Activated CD8-positive, alpha-beta memory T cell treated with anti-CD3 and anti-CD28 coated beads, Interleukin-2, amount 10 ng/mL, durations not matched to agents 7 days and 5 days (primary cell): ENCODE measurements at regions of chr12 and their contacts with region 1.

Region 1: DNA sequence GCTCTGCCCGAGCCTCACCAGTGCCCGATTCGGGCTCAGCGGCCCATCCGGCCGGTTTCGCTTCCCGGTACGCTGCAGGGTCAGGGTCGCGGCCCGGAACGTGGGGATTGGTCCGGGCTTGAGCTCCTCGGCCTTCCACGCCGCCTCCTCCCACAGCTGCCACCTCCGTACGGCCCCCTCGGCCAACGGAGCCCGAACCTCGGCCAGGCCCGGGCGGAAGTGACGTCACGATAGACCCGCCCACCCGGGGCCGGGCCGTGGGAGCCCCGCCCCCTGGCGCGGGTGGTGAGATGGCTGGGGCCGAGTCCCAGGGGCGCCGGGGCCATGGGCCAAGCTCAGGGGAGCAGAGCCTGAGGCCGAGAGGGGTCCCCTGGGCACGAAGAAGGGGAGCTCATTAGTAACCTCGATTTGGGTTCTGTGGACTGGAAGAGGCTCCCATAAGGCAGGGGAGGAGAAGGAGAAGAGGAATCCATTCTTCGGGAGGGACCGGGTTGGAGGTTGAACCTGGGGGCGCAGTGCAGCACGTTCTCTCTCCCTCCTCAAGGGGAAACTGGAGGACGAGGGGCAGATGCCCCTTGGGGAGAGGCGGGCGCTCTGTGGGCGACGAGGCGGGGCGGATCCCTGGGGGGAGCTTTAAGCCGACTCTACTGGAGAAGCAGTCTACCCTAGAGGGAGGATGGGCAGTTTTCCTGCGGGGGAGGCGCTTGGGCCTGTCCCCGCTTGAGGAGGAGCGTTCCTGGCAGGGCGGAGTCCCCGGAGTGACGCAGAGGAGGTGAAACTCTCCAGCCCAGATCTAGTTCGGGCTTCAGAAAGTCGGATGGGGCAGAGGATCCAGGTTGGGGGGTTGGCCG is at the start of gene MLF2:
- DNase-seq: peak; percentile 99
- ATAC-seq: peak; percentile 92
- H3K4me3 Mint-ChIP-seq: peak within 1 kb of the TSS; percentile 90
- H3K27ac Mint-ChIP-seq: peak within 1 kb of the TSS; percentile 98
- H3K4me1 Mint-ChIP-seq: peaks cover 25% of the 10 kb centered on the region
- H3K27me3 Mint-ChIP-seq: peaks cover 2% of the 10 kb centered on the region
- total RNA-seq, gene MLF2: 102 to 113 TPM

Region 2: DNA sequence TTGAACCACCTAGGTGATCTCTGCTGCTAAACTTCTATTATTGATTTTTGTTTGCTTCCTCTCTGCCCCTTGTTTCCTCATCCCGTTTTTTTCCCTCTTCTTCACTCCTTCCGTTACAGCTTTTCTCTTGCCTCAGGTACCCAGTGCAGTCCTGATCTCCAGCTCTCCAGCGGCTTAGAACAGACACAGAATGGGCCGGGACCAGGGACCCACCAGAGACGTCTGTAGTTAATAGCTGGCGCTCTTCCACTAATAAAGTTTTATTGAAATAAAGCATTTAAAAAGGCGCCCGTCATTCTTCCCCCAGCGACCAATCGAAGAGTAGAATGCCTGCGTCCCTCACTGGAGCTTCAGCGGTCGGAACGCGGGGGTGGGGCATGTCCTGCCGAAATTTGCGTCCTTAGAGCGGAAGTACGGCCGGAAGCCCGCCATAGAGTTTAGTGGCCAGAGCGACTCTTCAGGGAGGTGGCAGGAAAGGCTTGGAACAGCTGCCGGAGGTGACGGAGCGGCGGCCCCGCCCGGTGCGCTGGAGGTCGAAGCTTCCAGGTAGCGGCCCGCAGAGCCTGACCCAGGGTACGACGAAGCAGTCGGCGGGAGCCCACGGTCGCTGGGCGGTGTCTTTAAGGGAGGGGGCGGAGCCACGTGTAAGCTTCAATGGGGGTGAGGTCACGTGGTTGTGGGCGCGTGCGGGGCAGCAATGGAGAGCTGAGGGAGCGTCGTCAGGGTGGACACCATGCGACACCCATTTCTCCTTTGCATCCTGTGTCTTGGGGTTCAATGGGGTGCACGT is 29.3 kb before region 1 on chr12 and contains the start of gene COPS7A:
- CTCF ChIA-PET with region 1: interaction called, 39 read pairs
- DNase-seq: peak; percentile 99
- ATAC-seq: peak; percentile 95
- H3K4me3 Mint-ChIP-seq: peak within 1 kb of the TSS; percentile 79
- H3K27ac Mint-ChIP-seq: peak within 1 kb of the TSS; percentile 89
- H3K4me1 Mint-ChIP-seq: peaks cover 21% of the 10 kb centered on the region
- H3K27me3 Mint-ChIP-seq: no peaks in the 10 kb centered on the region
- total RNA-seq, gene COPS7A: 28.2 to 30.0 TPM

Region 3: GRCh38 chr12:6764011-6764828 is 11.1 kb after region 1 on chr12:
- CTCF ChIA-PET with region 1: interaction called, 90 read pairs
- DNase-seq: peak; percentile 87
- ATAC-seq: peak; percentile 82
- H3K4me3 Mint-ChIP-seq: peak overlapping the region; percentile 62
- H3K27ac Mint-ChIP-seq: peak overlapping the region; percentile 39
- H3K4me1 Mint-ChIP-seq: peaks cover 40% of the 10 kb centered on the region
- H3K27me3 Mint-ChIP-seq: peaks cover 30% of the 10 kb centered on the region

Region 4: DNA sequence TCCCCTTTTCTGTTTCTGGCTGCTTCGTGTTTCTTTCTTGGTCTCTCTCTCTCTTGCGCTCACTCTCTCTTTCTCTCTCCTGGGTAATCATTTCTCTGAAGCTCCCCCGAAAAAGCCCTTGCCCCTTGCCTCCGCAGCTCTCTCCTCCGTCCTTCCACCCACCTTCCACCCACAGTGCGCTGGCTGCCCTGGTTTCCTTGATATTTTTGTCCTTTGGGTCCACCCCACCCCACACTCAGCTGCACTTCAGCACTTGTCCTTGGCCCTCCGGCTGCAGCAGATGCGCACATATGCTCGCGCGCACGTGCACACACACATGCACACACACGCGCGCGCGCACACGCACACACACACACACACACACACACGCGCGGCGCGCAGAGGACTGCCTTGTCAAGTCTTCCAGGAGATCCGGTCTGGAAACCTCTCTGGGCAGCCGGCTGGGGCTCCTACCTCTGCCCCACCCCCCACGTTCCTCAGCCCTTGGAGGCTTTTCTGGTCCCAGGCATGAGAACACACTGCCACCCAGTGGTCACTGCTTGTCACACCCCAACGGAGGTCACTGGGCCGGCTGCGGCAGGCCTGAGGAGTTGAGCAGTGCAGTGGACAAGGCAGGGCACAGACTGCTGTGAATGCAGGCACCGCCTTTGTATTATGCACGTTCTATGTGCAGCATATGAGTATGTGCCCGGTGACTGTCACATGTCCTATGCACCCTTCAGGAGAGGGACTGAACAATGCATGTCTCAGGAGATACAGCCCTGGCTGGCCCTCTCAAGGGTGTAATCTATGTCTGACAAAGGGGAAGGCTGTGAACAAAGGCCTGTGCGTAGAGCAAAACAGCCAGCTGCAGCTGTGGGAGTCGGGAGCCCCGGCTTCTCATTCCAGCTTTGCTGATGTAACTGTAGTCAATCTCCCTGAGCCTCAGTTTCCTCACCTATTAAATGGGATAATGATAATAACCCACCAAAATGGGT is 25.7 kb after region 1 on chr12:
- CTCF ChIA-PET with region 1: interaction called, 117 read pairs
- DNase-seq: peak; percentile 94
- ATAC-seq: peak; percentile 70
- H3K4me3 Mint-ChIP-seq: peak overlapping the region; percentile 52
- H3K27ac Mint-ChIP-seq: peak overlapping the region; percentile 80
- H3K4me1 Mint-ChIP-seq: peaks cover 60% of the 10 kb centered on the region
- H3K27me3 Mint-ChIP-seq: no peaks in the 10 kb centered on the region

Region 5: DNA sequence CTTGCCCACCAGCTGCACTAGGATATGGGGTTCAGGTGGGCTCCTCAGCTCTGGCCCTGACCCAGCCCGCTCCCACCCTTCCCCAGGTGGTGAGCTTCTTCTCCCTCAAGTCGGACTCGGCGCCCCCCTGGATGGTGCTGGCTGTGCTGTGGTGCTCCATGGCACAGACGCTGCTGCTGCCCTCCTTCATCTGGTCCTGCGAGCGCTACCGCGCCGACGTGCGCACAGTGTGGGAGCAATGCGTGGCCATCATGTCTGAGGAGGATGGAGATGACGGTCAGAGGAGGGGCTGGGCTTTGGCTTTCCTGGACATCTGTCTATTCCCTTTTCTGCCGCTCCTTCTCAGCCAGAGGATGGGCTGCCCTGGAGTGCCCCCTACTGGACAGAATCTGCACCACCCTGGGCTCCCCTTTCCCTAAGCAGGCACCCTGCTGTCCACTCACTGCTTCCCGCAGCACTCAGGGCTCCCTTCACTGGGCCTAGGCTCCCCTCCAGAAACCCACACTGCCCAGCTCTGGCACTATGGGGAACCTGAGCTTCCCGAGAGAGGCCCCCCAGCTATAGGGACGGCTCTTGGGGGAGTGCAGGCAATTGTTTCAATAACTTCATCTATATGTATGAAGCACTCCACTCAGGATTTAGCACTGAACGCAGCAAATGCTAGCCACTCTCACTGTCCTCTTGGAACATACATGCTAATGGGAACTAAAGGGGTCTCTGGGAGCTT is 72.4 kb after region 1 on chr12:
- CTCF ChIA-PET with region 1: interaction called, 120 read pairs
- DNase-seq: peak; percentile 86
- ATAC-seq: peak; percentile 74
- H3K4me3 Mint-ChIP-seq: no peak overlapping the region
- H3K27ac Mint-ChIP-seq: no peak overlapping the region
- H3K4me1 Mint-ChIP-seq: peaks cover 28% of the 10 kb centered on the region
- H3K27me3 Mint-ChIP-seq: peaks cover 80% of the 10 kb centered on the region

Region 6: DNA sequence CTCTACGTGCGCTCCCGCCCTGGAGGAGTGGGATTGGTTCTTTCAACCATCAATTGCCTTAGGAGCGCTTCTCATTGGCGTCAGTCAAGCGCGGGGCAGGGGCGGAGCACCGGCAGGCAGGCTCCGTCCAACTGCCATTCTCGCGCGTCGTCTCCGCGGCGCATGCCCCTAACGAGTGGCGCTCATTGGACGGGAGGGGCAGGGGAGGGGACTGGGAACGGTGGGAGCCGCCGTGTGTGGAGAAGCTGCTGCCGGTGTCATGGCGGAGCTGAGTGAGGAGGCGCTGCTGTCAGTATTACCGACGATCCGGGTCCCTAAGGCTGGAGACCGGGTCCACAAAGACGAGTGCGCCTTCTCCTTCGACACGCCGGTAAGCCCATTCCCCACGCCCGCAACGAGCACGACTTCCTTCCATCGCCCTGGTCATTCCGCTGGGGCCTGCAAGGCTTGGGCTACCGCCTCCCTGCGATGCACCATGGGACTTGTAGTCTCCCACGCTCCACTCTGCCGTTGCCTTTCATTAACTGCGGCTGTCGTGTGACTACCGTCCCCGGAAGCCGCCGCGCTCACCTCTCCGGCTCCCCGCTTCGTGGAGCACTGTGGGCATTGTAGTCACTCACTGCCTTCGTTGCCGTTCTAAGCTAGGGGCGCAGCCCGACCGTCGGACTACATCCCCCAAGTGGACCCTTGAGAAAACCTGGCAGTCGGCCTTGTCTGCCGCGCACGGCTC is 98.9 kb after region 1 on chr12 and contains the start of gene USP5:
- CTCF ChIA-PET with region 1: interaction called, 29 read pairs
- DNase-seq: peak; percentile 100
- ATAC-seq: peak; percentile 82
- H3K4me3 Mint-ChIP-seq: peak within 1 kb of the TSS; percentile 85
- H3K27ac Mint-ChIP-seq: peak within 1 kb of the TSS; percentile 100
- H3K4me1 Mint-ChIP-seq: peaks cover 45% of the 10 kb centered on the region
- H3K27me3 Mint-ChIP-seq: no peaks in the 10 kb centered on the region
- total RNA-seq, gene USP5: 98.8 to 129 TPM